Left ventricle myocardium superior (tissue), 1 donor: ENCODE measurements at regions of chr1 and their contacts with region 1.

Region 1: DNA sequence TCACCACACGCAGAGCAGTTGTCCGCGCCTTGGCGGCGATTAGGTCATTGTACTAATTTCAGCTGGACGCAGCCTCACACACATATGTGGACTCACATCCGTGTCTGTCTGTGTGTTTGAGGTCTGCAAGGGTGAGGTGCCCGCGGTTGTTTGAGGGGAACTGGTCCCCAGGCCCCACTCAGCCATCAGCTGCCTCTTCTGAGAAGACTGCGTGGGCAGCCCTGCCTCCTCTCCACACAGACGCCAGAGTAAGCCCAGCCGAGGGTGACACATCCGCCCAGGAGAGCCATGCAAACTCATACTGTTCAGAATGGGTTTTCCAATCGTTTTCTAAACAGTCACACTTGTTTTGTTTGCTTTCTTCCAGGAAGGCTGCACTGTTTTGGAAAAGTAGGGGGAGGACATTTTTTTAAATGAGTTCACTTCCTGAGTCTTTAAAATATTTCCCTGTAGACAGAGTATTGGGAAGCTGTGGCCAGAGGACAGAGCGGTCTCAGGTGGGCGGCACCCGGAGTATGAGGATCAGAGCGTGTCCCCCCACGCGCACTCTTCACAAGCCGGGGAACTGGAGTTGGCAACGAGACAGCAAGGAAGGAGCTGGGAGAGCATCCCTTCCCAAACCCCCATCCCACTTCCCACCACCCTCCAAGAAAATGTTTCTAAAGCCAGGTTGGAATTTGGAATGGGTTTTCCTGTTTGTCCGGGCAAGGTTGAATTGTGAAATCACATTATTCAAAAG is 53.3 kb downstream of the TOMM20 start:
- DNase-seq: peak; percentile 85
- ATAC-seq: peak; percentile 76

Region 2: GRCh38 chr1:234499119-234499942 is 576.0 kb before region 1 on chr1:
- intact Hi-C with region 1: loop called (anchors 5 kb)
- DNase-seq: peak; percentile 95
- ATAC-seq: peak; percentile 96

Region 3: DNA sequence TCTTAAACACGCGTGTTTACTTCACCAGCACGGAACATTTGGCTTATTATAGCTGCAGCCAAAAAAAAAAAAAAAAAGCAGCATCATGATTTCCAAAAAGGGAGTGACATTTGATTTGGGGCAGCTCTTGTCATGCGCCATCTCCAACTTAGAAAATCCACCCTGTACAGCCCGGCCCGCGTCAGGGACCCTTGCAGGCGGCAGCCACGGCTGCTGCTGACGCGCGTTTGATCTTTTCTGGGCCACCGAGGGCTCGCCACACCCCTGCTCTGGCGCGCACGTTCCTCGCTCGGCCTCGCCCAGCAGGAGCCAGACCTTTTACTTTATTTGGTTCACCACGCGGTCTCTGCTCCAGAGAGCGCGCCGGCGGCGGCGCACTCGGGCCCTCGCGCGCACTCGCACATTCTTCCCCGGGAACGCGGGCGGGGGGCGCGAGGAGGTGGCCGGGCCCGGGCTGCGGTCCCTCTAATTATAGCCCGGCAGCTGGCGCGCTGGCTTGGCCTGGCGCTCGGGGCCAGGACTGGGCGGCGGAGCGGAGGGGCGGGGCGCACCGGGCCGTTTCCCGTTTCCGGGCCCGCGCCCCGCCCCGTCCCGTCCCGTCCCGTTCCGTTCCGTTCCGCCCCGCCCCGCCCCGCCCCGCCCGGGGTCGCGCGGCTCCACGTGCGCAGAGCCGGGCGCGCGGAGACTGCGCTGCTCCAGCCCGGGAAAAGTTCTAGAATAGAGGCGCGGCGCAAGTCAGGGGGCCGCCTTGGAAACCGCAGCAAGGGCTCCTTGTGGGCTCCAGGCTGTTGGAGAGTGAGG is 475.5 kb before region 1 on chr1:
- intact Hi-C with region 1: loop called (anchors 5 kb)
- DNase-seq: peak; percentile 96
- ATAC-seq: peak; percentile 91

Region 4: DNA sequence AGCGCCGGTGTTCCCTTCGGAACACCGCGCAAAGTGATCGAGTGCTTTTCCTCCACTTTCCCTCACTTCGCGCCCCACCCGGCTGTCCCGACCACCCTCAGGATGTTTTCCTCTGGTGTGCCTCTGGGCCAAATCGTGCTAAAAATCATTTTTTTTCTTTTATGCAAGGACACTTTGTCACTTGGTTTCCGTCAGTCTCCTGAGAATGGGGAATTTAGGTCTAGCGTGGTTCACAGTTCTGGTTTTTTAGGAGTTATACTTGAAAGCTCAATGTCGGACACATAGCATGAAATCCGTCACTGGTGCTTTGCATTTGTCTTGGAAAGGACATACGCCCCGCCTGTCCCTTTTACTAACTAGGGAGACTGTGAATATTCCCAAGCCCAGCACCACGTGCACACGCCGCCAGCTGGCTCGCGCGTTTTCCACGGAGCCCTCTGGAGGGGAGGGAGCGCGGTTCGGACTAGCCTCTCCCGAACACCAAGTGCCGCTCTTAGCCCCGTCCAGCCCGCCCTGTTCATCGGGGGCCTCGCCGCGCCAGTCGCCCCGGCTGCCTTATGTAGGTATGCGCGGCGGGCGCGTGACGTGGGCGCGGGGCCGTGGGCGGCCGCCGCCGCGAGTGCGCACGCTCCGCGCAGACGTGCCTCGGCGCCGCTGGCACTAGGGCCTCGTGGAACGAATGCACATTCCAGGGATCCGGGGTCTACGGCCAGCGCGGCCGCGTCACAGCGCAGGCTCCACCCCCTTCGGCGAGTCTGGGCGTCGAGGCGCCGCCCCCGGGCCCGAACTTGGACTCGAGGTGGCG is 464.8 kb before region 1 on chr1:
- intact Hi-C with region 1: loop called (anchors 5 kb)
- DNase-seq: peak; percentile 99
- ATAC-seq: peak; percentile 75

Region 5: DNA sequence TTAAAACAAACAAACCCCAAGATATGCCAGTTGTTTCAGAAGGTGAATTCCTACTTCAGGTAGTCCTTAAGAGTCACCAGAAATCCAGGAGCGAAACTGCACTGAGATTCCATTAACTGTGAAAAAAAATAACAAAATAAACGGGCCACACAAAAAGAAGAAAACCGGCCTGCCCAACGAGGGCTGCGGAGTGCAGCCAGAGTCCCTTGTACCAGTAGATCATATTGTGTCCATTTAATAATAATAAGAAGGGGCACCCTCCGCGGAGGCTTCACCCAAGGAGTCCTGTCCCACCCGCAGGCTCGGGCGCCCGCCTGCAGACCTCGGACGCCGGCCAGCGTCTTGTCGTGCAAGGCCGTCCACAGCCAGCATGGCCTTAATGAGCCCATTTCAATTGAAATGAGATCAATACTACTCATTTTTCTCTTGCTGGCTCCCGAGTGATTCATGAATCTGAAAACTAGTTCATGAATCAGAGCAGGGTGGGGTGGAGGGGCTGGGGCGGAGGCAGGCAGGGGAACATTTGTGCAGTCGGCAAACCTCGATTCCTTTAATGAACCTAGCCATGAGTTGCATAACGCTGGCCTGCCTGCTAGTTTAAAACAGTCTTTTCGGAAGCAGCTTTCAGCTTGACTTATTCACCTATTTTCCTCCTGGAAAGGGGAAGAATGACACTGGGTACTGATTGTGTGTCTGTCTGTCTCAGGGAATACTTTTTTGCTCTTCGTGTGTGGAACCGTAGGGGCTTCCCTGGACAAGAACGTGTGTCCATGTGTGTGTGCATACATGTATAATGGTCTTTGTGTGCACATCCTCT is 352.2 kb before region 1 on chr1:
- intact Hi-C with region 1: loop called (anchors 10 kb)
- DNase-seq: peak; percentile 69
- ATAC-seq: peak; percentile 34

Region 6: GRCh38 chr1:234997201-234997895 is 78.0 kb before region 1 on chr1:
- intact Hi-C with region 1: loop called (anchors 10 kb)
- DNase-seq: peak; percentile 99
- ATAC-seq: peak; percentile 93